ENCODE measurements at regions of chr5 and their contacts with region 1.

Region 1: GRCh38 chr5:140145818-140146522 is 20.2 kb downstream of the IGIP start:
- DNase-seq: peak; percentile 59
- H3K4me3 ChIP-seq: peak overlapping the region; percentile 24 to 36
- H3K27ac ChIP-seq: no peak overlapping the region
- H3K4me1 ChIP-seq: peaks cover 5% of the 10 kb centered on the region
- H3K27me3 ChIP-seq: no peaks in the 10 kb centered on the region
- CTCF ChIP-seq: peak; percentile 50 to 86 (median 65)
- POLR2A ChIP-seq: peak; percentile 19

Region 2: GRCh38 chr5:140113699-140114263 is 32.2 kb before region 1 on chr5 and contains the start of gene PURA:
- intact Hi-C with region 1: loop called (anchors 5 kb)
- DNase-seq: peak; percentile 92
- H3K4me3 ChIP-seq: peak within 1 kb of the TSS; percentile 61 to 67
- H3K27ac ChIP-seq: peak within 1 kb of the TSS; percentile 87 to 94
- H3K4me1 ChIP-seq: peaks cover 19% of the 10 kb centered on the region
- H3K27me3 ChIP-seq: no peaks in the 10 kb centered on the region
- CTCF ChIP-seq: peak in 1 of 4 experiments; percentile 57
- POLR2A ChIP-seq: peak; percentile 87
- total RNA-seq, gene PURA: 24.2 to 27.2 TPM

Region 3: DNA sequence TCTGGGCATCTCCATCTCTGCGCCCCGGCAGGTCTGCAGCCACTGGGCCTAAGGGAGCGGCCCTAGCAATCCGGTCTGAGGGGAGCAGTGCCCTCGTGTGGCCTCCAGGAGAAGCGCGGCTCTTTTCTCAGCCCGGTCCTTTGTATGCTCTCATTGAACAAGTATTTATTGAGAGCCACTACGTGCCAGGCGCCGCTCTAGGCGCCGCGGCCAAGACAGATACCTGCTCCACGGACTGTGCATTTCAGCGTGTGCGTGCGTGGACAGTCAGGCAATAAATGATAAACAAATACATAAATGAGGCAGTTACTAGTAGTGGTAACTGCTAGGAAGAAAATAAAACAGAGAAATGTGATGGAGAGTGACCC is 211.7 kb after region 1 on chr5:
- intact Hi-C with region 1: no loop called
- DNase-seq: peak; percentile 81
- H3K4me3 ChIP-seq: no peak overlapping the region
- H3K27ac ChIP-seq: no peak overlapping the region
- H3K4me1 ChIP-seq: no peaks in the 10 kb centered on the region
- H3K27me3 ChIP-seq: no peaks in the 10 kb centered on the region
- CTCF ChIP-seq: peak; percentile 78 to 95 (median 87)
- POLR2A ChIP-seq: no peak

Measured in prostate gland (tissue), 2 donors.